ENCODE measurements at regions of chr5 and their contacts with region 1.

Region 1: DNA sequence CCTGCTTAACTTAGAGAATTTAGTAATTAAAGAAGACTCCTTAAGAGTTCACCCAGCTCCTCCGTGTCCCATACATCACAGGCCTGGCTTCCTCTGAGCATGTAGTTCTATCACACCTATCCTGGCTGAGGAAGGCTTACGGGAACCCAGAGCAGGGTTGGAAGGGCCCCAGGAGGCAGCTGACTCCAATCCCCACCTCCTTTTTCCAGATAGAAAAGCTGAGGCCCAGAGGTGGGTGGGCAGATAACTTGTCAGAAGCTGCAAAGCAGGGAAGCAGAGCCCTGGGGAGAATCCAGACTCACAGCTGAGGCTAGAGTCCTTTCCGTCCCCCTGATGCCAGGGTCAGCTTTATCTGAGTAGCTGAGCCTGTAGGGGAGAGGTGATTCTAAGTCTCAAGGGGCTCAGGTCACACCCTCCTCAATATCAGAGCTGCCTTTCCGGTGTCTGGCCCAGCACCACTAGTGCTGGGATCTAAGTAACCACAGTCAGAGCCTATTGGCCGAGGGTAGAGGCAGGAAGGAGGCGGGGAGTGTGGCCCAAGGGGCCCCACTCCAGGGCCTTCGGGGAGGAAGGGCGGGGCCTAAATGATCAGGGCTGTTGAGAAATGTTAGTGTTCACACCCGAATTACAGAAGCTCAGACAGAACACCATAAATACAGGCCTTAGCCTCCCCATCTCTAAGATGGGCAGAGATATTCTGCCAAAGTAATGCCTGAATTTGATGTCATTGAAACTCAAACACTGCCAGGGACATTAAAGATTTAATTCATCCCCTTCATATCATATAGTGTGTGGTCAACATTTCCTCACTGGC is 9.9 kb downstream of the CCDC69 start:
- DNase-seq: peak; percentile 60 to 93 (median 81)
- ATAC-seq: peak; percentile 74 to 78
- H3K4me3 Mint-ChIP-seq: peak overlapping the region; percentile 80 to 96 (median 89)
- H3K27ac Mint-ChIP-seq: peak overlapping the region; percentile 93 to 100 (median 98)
- H3K4me1 Mint-ChIP-seq: peaks cover 40 to 95% (median 85%) of the 10 kb centered on the region in 4 donors
- H3K27me3 Mint-ChIP-seq: no peaks in the 10 kb centered on the region

Region 2: GRCh38 chr5:151141535-151141934 is 72.5 kb before region 1 on chr5:
- POLR2A ChIA-PET with region 1: interaction called, 10 read pairs
- DNase-seq: peak; percentile 37 to 80 (median 55)
- ATAC-seq: peak; percentile 80 to 81
- H3K4me3 Mint-ChIP-seq: peak overlapping the region; percentile 80 to 94 (median 92)
- H3K27ac Mint-ChIP-seq: peak overlapping the region; percentile 91 to 99 (median 95)
- H3K4me1 Mint-ChIP-seq: peaks cover 67 to 99% (median 98%) of the 10 kb centered on the region in 4 donors
- H3K27me3 Mint-ChIP-seq: no peaks in the 10 kb centered on the region

Region 3: DNA sequence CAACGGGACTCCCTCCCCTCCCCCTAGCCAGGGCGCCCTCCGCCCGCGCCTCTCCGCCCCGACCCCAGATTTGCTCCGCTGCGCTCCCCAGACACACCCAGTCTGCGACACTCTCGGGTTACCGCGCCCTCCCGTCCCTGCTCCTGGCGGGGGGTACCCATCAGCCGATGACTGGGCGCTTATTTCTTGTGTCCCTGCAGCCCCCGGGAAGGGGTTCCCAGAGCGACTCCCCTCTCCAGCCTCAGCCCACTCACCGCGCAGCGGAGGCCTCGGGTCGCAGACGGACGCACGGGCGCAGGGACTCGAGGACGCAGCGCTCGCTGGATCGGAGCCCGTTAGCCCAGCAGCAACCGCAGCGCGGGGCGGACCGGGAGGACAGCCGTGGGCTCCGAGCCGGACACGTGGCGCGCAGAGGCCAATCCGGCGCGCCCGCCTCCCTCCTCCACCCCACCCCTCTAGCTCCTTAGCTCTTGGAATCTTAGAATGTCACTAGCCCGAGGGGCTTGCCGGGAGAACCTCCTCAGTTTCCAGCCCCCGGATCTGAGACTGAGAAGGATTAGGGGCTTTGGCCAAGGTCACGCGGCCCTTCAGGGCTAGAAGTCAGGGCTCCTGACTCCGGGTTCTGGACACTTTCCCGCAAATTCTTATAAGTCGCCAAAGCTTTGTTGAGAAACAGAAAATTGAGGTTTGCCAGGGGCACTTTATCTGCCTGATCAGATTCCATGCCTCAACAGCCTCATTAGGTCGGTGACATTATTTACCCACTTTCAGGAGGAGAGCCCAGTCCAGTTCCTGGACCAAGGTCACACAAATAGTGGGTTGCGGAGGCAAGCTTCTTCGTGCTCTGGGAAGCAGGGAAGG is 56.4 kb before region 1 on chr5 and contains the start of gene ANXA6:
- POLR2A ChIA-PET with region 1: interaction called, 27 read pairs
- DNase-seq: peak; percentile 24 to 76 (median 60)
- ATAC-seq: peak; percentile 75 to 76
- H3K4me3 Mint-ChIP-seq: peak within 1 kb of the TSS; percentile 93 to 99 (median 95)
- H3K27ac Mint-ChIP-seq: peak within 1 kb of the TSS; percentile 94 to 99 (median 96)
- H3K4me1 Mint-ChIP-seq: peaks cover 38 to 69% (median 60%) of the 10 kb centered on the region in 4 donors
- H3K27me3 Mint-ChIP-seq: no peaks in the 10 kb centered on the region
- polyA plus RNA-seq, gene ANXA6: 242 to 318 (median 254) TPM

Region 4: GRCh38 chr5:151202381-151203139 is 11.4 kb before region 1 on chr5:
- POLR2A ChIA-PET with region 1: interaction called, 65 read pairs
- DNase-seq: peak in 2 of 10 donors; percentile 14 to 27
- ATAC-seq: peak; percentile 76 to 93
- H3K4me3 Mint-ChIP-seq: peak overlapping the region in 9 of 10 donors; percentile 4 to 74 (median 58)
- H3K27ac Mint-ChIP-seq: peak overlapping the region; percentile 31 to 96 (median 88)
- H3K4me1 Mint-ChIP-seq: peaks cover 16 to 56% (median 45%) of the 10 kb centered on the region in 4 donors
- H3K27me3 Mint-ChIP-seq: no peaks in the 10 kb centered on the region

Region 5: GRCh38 chr5:151239237-151239861 is 25.3 kb after region 1 on chr5:
- POLR2A ChIA-PET with region 1: interaction called, 92 read pairs
- DNase-seq: peak in 6 of 10 donors; percentile 27 to 72 (median 56)
- ATAC-seq: peak; percentile 50 to 58
- H3K4me3 Mint-ChIP-seq: peak overlapping the region in 9 of 10 donors; percentile 30 to 82 (median 63)
- H3K27ac Mint-ChIP-seq: peak overlapping the region in 6 of 10 donors; percentile 11 to 84 (median 67)
- H3K4me1 Mint-ChIP-seq: peaks cover 20 to 57% (median 44%) of the 10 kb centered on the region in 4 donors
- H3K27me3 Mint-ChIP-seq: no peaks in the 10 kb centered on the region

Region 6: DNA sequence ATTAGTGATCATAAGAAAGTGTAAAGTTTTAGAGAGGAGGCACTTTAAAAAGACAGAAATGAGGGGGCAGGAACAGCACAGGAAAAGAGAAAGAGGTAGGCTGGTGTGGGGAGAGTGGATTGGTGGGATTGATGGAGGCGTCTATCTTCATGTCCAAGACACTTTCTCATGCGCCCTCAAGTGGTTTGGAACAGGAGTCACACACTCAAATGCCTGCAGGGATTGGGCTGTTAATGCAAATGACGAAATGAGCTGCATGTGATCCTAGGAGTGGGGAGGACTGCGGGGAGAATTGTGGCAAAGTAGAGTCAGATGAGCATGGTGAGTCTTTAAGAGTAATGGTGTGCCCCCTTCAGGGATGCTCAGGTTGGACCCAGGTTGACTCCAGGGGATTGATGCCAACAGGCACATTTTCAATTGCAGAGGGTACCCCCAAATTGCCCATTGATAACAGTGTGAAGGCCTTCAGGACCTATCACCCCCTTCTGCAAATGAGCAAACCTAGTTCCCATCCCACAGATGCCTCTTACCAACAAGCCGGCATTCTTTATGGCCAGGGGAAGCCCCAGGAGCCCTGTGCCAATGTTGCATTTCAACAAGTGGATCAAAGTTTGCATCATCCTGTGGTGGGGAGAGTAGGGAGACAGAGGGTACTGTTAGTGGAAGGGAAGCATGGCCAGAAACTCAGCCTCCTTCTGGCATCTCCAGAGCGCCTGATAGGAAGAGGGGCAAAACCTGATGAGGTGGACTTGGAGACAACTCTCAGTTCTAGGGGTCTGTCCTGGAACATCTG is 84.3 kb after region 1 on chr5:
- POLR2A ChIA-PET with region 1: no interaction called
- DNase-seq: peak in 3 of 10 donors; percentile 7 to 32 (median 9)
- ATAC-seq: peak in 1 of 2 donors; percentile 49
- H3K4me3 Mint-ChIP-seq: no peak overlapping the region
- H3K27ac Mint-ChIP-seq: no peak overlapping the region
- H3K4me1 Mint-ChIP-seq: peaks cover 0 to 1% (median 0%) of the 10 kb centered on the region in 4 donors
- H3K27me3 Mint-ChIP-seq: peaks cover 7 to 32% (median 8%) of the 10 kb centered on the region in 5 donors

Region 7: GRCh38 chr5:152004095-152004494 is 790.1 kb after region 1 on chr5:
- POLR2A ChIA-PET with region 1: no interaction called
- DNase-seq: no peak
- ATAC-seq: no peak
- H3K4me3 Mint-ChIP-seq: no peak overlapping the region
- H3K27ac Mint-ChIP-seq: peak overlapping the region in 2 of 10 donors; percentile 4 to 22
- H3K4me1 Mint-ChIP-seq: peaks cover 0 to 6% (median 1%) of the 10 kb centered on the region in 4 donors
- H3K27me3 Mint-ChIP-seq: no peaks in the 10 kb centered on the region

Measured in naive thymus-derived CD8-positive, alpha-beta T cell (primary cell).